Posterior vena cava (tissue), 2 donors: ENCODE measurements at regions of chr1 and their contacts with region 1.

Region 1: DNA sequence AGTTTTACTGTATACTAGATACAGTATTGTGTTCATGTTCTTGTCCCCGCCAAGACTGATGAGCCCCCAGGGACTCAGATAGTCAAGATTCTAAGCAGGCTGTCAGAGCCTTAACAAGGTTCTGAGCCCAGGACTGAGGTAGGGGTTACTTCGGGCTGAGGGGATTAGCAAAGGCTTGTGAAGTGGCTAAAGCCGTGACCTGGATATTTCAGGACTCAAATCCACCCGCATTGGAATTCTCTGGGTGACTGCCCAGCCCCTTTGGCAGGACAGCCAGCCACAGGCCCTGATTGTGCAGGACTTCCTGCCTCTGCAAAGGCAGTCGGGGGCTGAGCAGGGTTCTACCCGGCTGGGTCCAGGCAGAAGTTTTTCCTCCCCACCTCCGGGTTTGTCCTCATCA is at the start of gene PLA2G5:
- DNase-seq: peak; percentile 90
- total RNA-seq, gene PLA2G5: 6.7 to 9.8 TPM

Region 2: DNA sequence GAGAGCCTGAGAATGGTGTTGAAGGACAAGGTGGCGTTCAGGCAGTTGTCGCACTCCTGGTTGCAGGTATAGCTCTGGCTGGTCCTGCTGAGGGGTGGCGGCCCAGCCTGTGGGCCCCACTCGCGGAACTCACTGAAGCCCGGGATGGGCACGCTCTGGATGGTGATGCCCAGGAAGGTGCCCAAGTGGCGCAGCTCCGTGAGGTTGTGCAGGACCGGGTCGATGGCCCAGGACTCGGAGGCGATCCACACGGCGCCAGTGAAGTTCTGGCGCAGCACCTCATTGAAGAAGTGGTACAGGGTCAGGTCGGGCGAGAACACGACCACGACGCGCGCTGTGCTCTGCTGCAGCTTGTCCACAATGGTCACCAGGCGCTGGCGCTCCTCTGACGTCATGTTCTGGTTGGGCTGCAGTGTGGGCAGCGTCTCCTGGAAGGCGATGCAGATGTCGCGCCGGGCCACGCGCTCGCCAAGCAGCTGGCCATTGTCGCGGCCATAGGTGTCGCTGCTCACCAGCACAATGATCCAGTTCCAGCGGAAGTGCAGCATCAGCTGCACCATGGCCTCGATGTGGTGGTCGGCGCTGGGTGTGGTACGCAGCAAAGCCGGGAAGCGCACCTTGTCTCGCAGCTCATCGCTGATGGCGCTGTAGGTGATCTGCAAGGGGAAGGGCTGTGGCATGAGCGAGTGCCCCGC is 1215.4 kb before region 1 on chr1:
- intact Hi-C with region 1: loop called in 1 of 2 experiments (anchors 5 kb)
- DNase-seq: no peak

Region 3: DNA sequence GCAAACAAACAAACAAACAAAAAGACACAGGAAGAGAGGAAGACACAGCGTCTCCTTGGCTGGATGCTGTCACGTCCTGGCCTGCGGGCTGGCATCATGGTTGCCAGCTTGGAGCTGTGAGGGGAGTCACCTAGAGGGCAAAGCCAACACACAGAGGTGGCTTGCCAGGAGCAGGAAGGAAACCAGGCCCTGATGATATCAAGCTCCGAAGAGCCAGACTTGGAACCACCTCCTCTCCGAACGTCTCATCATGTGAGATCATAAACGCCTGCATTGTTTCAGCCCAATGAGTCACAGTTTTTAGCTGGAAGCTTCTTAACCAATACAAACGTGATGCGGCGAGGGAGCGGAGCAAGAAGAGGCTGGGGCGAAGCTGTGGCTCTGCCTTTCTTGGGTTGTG is 40.8 kb after region 1 on chr1:
- intact Hi-C with region 1: no loop called
- DNase-seq: peak; percentile 74